Activated B cell treated with CpG ODN at 0.5 μM for 24 hours (primary cell): ENCODE measurements at regions of chr7 and their contacts with region 1.

Region 1: DNA sequence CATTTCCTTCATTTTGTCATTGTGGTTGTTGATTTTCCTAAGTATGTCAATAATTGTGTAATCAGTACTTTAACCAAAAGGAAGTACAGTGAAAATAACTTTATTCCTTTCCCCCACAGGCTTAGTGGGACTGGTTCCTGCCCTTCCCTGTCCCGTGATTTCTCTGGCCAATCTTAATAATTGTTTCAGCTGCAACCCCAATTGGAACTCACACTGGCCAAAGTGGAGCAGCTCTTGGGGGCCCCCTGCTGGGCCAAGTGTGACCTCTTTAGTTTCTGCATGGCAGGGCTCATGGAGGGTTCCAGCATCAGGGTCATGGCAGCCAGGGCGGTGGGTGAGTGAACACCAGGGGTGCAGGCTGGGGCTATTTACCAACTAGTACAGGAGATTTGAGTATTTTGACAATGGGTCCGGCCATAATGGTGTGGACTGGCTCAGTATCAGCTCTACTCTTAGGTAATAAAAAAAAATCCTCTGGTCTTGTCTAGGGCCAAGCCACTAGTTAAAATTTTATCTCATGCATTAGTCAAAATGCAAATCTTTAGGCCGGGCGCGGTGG is 31.7 kb downstream of the CYCS start:
- DNase-seq: peak; percentile 71
- ATAC-seq: peak; percentile 89
- H3K4me3 Mint-ChIP-seq: no peak overlapping the region
- H3K27ac Mint-ChIP-seq: no peak overlapping the region
- H3K4me1 Mint-ChIP-seq: peaks cover 8% of the 10 kb centered on the region
- H3K27me3 Mint-ChIP-seq: peaks cover 3% of the 10 kb centered on the region
- CTCF ChIP-seq: no peak

Region 2: DNA sequence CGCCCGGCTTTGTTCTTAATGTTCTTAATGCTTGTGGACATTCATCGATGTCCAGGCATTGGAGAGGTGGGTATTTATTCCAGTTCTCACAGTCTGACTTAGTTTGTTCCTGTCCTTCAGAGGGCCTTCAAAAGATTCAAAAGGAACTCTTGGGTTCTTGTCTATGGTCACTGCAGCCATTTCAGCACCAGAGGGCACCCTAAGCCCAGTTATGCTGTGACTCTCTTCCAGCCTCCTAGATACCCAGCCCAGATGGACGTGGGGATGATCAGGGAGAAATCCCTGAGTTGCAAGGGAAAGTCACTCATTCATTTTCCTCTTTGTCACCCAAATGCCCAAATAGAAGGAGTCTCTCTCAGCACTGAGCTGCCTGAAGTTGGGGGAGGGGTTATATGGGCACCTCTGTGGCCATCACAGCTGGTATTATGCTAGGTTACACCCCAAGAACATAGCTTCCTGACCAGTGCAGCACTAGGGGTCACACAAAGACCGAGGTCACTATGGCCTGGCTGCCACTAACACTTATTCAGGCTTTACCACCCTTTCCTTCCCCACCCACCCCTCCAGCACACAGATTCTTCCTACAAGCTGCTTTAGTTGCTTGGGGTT is 1522.7 kb before region 1 on chr7:
- CTCF ChIA-PET with region 1: no interaction called
- POLR2A ChIA-PET with region 1: no interaction called
- intact Hi-C with region 1: loop called (anchors 2 kb)
- DNase-seq: peak; percentile 53
- ATAC-seq: peak; percentile 89
- H3K4me3 Mint-ChIP-seq: no peak overlapping the region
- H3K27ac Mint-ChIP-seq: no peak overlapping the region
- H3K4me1 Mint-ChIP-seq: no peaks in the 10 kb centered on the region
- H3K27me3 Mint-ChIP-seq: peaks cover 14% of the 10 kb centered on the region
- CTCF ChIP-seq: peak; percentile 29

Region 3: DNA sequence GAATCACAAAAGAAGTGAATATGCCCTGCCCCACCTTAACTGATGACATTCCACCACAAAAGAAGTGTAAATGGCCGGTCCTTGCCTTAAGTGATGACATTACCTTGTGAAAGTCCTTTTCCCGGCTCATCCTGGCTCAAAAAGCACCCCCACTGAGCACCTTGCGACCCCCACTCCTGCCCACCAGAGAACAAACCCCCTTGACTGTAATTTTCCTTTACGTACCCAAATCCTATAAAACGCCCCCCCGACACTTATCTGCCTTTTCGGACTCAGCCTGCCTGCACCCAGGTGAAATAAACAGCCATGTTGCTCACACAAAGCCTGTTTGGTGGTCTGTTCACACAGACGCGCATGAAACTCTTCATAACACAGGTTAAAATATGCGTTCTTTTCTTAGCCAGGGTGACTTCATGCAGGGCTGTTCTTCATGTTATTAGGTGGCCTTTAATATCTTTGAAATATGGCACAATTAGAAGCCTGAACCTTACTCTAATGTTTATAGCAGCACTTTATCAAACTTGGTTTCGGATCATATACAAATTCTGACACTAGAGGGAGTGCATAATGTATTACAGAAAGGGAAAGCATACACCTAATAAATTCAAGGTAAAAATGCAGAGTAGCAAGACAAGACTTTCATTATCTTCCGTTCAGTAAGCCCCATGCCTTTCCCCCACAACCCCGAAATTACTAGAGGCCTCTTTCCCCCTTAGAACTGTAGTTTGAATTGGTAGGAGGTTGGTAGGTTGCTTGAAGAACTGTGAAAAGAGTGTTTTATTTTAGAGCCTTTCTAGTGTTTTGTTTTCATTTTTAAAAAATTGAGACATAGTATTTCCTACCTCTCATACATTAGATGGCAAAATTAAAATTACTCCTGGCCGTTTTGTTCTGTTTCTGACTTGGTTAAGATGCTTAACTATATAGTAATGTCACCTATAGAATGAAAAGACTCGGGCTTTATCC is 691.4 kb before region 1 on chr7:
- CTCF ChIA-PET with region 1: no interaction called
- POLR2A ChIA-PET with region 1: no interaction called
- intact Hi-C with region 1: loop called (anchors 10 kb)
- DNase-seq: no peak
- ATAC-seq: no peak
- H3K4me3 Mint-ChIP-seq: no peak overlapping the region
- H3K27ac Mint-ChIP-seq: no peak overlapping the region
- H3K4me1 Mint-ChIP-seq: peaks cover 6% of the 10 kb centered on the region
- H3K27me3 Mint-ChIP-seq: peaks cover 6% of the 10 kb centered on the region
- CTCF ChIP-seq: no peak

Region 4: GRCh38 chr7:24812310-24812945 is 280.9 kb before region 1 on chr7:
- CTCF ChIA-PET with region 1: interaction called, 213 read pairs
- POLR2A ChIA-PET with region 1: no interaction called
- intact Hi-C with region 1: loop called (anchors 1 kb)
- DNase-seq: no peak
- ATAC-seq: peak; percentile 61
- H3K4me3 Mint-ChIP-seq: no peak overlapping the region
- H3K27ac Mint-ChIP-seq: no peak overlapping the region
- H3K4me1 Mint-ChIP-seq: no peaks in the 10 kb centered on the region
- H3K27me3 Mint-ChIP-seq: no peaks in the 10 kb centered on the region
- CTCF ChIP-seq: peak; percentile 85

Region 5: GRCh38 chr7:25117226-25118047 is 24.1 kb after region 1 on chr7:
- CTCF ChIA-PET with region 1: interaction called, 12 read pairs
- POLR2A ChIA-PET with region 1: interaction called, 4 read pairs
- intact Hi-C with region 1: loop called (anchors 1 kb)
- DNase-seq: no peak
- ATAC-seq: peak; percentile 91
- H3K4me3 Mint-ChIP-seq: peak overlapping the region; percentile 75
- H3K27ac Mint-ChIP-seq: peak overlapping the region; percentile 88
- H3K4me1 Mint-ChIP-seq: peaks cover 43% of the 10 kb centered on the region
- H3K27me3 Mint-ChIP-seq: no peaks in the 10 kb centered on the region
- CTCF ChIP-seq: no peak